HCT116 (cell line): ENCODE measurements at regions of chr11 and their contacts with region 1.

Region 1: DNA sequence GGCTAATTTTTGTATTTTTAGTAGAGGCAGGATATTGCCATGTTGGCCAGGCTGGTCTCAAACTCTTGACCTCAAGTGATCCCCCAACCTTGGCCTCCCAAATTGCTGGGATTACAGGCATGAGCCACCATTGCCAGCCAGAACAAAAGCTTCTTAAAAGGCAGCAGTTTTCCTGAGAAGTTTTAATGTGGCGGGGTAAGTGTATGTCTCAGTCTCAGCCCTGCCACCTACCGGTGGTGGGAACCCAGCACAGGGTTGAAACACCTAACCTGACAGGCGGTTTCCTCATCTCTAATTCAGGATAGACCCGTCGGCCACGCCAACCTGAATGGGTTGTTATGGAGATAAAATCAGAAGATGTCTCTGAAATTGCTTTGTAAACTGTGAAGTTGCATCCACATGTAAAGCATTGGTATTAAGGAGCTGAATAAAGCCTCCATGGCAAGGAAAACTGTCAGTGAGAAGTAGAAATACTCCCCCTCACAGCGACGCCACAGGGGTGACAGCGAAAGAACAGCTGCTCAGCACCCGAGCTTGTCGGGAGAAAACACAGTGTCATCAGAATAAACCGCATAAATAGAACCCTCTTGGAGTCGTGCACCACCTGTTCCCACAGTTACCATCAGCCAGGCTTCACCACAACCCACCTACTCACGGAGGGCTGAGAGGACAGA is 165.9 kb upstream of the NCAM1 start:
- DNase-seq: peak; percentile 38
- ATAC-seq: peak; percentile 97
- H3K4me3 ChIP-seq: no peak overlapping the region
- H3K27ac ChIP-seq: no peak overlapping the region
- H3K4me1 ChIP-seq: no peaks in the 10 kb centered on the region
- H3K27me3 ChIP-seq: 0 out of 2 replicates have a peak, but pooled peaks cover 5% of the 10 kb centered on the region
- CTCF ChIP-seq: peak; percentile 69 to 91 (median 82); a peak in 5 of 6 replicates
- POLR2A ChIP-seq: no peak
- RAD21 ChIP-seq: peak; percentile 67

Region 2: DNA sequence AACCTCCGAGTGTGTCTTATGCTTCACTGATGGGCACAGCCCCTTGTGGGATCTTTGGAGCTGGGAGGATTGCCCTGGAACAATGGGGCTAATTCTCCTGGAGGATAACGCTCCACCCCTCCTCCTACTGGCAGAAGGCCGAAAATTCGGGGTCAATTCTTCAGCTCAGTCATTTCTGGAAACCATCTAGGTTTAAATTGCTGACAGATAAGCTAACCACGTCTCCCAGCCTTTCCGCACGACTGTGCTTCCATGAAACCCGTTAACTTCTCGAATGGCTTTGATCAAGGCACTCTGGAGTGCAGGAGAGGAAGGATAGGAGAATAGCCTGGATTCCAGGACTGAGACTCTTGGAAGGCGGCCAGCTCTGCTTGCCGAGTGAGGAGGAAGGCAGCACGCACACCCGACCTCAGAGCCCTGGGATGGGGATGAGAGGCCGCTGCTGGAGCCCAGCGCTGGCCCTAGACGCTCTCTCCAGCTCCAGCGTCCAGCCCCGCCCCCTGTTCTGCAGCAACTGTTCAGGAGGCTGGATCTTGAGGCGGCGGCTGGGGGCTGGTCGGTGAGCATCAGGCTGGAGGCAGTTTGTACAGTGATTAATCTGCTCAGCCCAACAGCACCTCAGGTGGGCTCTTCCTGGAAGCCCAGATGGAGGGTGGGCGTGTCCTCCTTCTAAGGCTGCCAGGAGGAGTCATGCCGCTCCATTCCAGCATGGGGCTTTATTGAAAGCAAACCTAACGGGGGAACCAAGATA is 10.8 kb before region 1 on chr11:
- CTCF ChIA-PET with region 1: interaction called, 14 read pairs
- POLR2A ChIA-PET with region 1: no interaction called
- RAD21 ChIA-PET with region 1: no interaction called
- intact Hi-C with region 1: no loop called
- DNase-seq: no peak
- ATAC-seq: no peak; the same call in 1 of the 2 replicates
- H3K4me3 ChIP-seq: no peak overlapping the region
- H3K27ac ChIP-seq: no peak overlapping the region
- H3K4me1 ChIP-seq: peaks cover 9% of the 10 kb centered on the region in 2 experiments
- H3K27me3 ChIP-seq: peaks cover 27% of the 10 kb centered on the region
- CTCF ChIP-seq: no peak
- POLR2A ChIP-seq: no peak
- RAD21 ChIP-seq: no peak

Region 3: GRCh38 chr11:113113801-113114706 is 318.8 kb after region 1 on chr11:
- CTCF ChIA-PET with region 1: interaction called, 10 read pairs
- POLR2A ChIA-PET with region 1: no interaction called
- RAD21 ChIA-PET with region 1: no interaction called
- intact Hi-C with region 1: no loop called
- DNase-seq: no peak
- ATAC-seq: peak; percentile 98
- H3K4me3 ChIP-seq: no peak overlapping the region
- H3K27ac ChIP-seq: no peak overlapping the region
- H3K4me1 ChIP-seq: no peaks in the 10 kb centered on the region
- H3K27me3 ChIP-seq: peaks cover 41% of the 10 kb centered on the region; the same call in 1 of the 2 replicates
- CTCF ChIP-seq: peak; percentile 35 to 66 (median 58); a peak in 4 of 6 replicates
- POLR2A ChIP-seq: no peak
- RAD21 ChIP-seq: peak; percentile 63